ENCODE measurements at regions of chr12 and their contacts with region 1.

Region 1: GRCh38 chr12:43805860-43806736 is at the start of gene TWF1:
- DNase-seq: peak; percentile 85 to 92 (median 88)
- H3K4me3 ChIP-seq: peak within 1 kb of the TSS; percentile 85 to 89
- H3K4me3 Mint-ChIP-seq: peak within 1 kb of the TSS; percentile 99 to 100 (median 100)
- H3K27ac ChIP-seq: peak within 1 kb of the TSS; percentile 86
- H3K27ac Mint-ChIP-seq: peak within 1 kb of the TSS; percentile 99 to 100 (median 100)
- H3K4me1 ChIP-seq: peaks cover 34% of the 10 kb centered on the region
- H3K4me1 Mint-ChIP-seq: peaks cover 17 to 50% (median 35%) of the 10 kb centered on the region in 4 donors
- H3K27me3 ChIP-seq: no peaks in the 10 kb centered on the region
- H3K27me3 Mint-ChIP-seq: no peaks in the 10 kb centered on the region
- total RNA-seq, gene TWF1: 31.0 to 32.4 TPM

Region 2: GRCh38 chr12:42237052-42237852 is 1568.8 kb before region 1 on chr12:
- CTCF ChIA-PET with region 1: no interaction called
- POLR2A ChIA-PET with region 1: interaction called, 3 read pairs
- intact Hi-C with region 1: loop called (anchors 5 kb)
- DNase-seq: peak; percentile 72 to 80 (median 77)
- H3K4me3 ChIP-seq: peak overlapping the region; percentile 33 to 70
- H3K4me3 Mint-ChIP-seq: peak overlapping the region; percentile 86 to 92 (median 90)
- H3K27ac ChIP-seq: peak overlapping the region; percentile 66
- H3K27ac Mint-ChIP-seq: peak overlapping the region; percentile 82 to 94 (median 93)
- H3K4me1 ChIP-seq: peaks cover 49% of the 10 kb centered on the region
- H3K4me1 Mint-ChIP-seq: peaks cover 29 to 68% (median 36%) of the 10 kb centered on the region in 4 donors
- H3K27me3 ChIP-seq: no peaks in the 10 kb centered on the region
- H3K27me3 Mint-ChIP-seq: no peaks in the 10 kb centered on the region

Region 3: GRCh38 chr12:42325653-42326474 is 1480.2 kb before region 1 on chr12 and contains the starts of genes PPHLN1 and ZCRB1:
- CTCF ChIA-PET with region 1: no interaction called
- POLR2A ChIA-PET with region 1: interaction called, 5 read pairs
- intact Hi-C with region 1: loop called (anchors 5 kb)
- DNase-seq: peak; percentile 74 to 78 (median 76)
- H3K4me3 ChIP-seq: peak within 1 kb of the TSS; percentile 69 to 84
- H3K4me3 Mint-ChIP-seq: peak within 1 kb of the TSS; percentile 94 to 99 (median 99)
- H3K27ac ChIP-seq: peak within 1 kb of the TSS; percentile 79
- H3K27ac Mint-ChIP-seq: peak within 1 kb of the TSS; percentile 89 to 99 (median 99)
- H3K4me1 ChIP-seq: peaks cover 46% of the 10 kb centered on the region
- H3K4me1 Mint-ChIP-seq: peaks cover 29 to 60% (median 48%) of the 10 kb centered on the region in 4 donors
- H3K27me3 ChIP-seq: no peaks in the 10 kb centered on the region
- H3K27me3 Mint-ChIP-seq: no peaks in the 10 kb centered on the region
- total RNA-seq, gene PPHLN1: 98.0 to 104 TPM
- total RNA-seq, gene ZCRB1: 21.2 to 27.1 TPM

Region 4: DNA sequence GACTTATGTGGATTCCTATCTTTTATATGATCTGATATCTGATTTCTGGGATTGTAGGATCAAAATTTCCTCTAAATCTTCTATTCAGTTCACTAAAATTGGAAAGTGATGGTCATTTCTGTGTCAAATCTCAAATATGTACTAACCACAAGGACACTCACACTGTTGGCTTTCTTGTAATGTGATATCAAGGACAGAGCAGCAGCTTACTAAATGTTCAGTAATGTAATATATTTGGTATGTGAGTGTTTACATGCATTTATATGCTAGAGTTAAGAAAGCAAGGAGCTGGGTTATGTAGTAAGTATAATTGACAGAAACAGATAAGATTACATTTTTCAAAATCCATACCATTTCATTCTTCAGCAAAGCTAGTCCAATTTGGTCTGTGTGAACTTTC is 64.0 kb before region 1 on chr12:
- CTCF ChIA-PET with region 1: no interaction called
- POLR2A ChIA-PET with region 1: no interaction called
- intact Hi-C with region 1: no loop called
- DNase-seq: no peak
- H3K4me3 ChIP-seq: no peak overlapping the region
- H3K4me3 Mint-ChIP-seq: no peak overlapping the region
- H3K27ac ChIP-seq: no peak overlapping the region
- H3K27ac Mint-ChIP-seq: no peak overlapping the region
- H3K4me1 ChIP-seq: no peaks in the 10 kb centered on the region
- H3K4me1 Mint-ChIP-seq: peaks cover 0 to 3% (median under 1%) of the 10 kb centered on the region in 4 donors
- H3K27me3 ChIP-seq: no peaks in the 10 kb centered on the region
- H3K27me3 Mint-ChIP-seq: no peaks in the 10 kb centered on the region

Region 5: GRCh38 chr12:43758728-43759563 is 47.2 kb before region 1 on chr12 and contains the starts of genes IRAK4 and PUS7L:
- CTCF ChIA-PET with region 1: interaction called, 14 read pairs
- POLR2A ChIA-PET with region 1: interaction called, 88 read pairs
- intact Hi-C with region 1: loop called (anchors 1 kb)
- DNase-seq: peak; percentile 90 to 96 (median 93)
- H3K4me3 ChIP-seq: peak within 1 kb of the TSS; percentile 67 to 91
- H3K4me3 Mint-ChIP-seq: peak within 1 kb of the TSS; percentile 98 to 99 (median 98)
- H3K27ac ChIP-seq: peak within 1 kb of the TSS; percentile 93
- H3K27ac Mint-ChIP-seq: peak within 1 kb of the TSS; percentile 99
- H3K4me1 ChIP-seq: peaks cover 61% of the 10 kb centered on the region
- H3K4me1 Mint-ChIP-seq: peaks cover 45 to 84% (median 69%) of the 10 kb centered on the region in 4 donors
- H3K27me3 ChIP-seq: no peaks in the 10 kb centered on the region
- H3K27me3 Mint-ChIP-seq: no peaks in the 10 kb centered on the region
- total RNA-seq, gene IRAK4: 64.0 to 73.1 TPM
- total RNA-seq, gene PUS7L: 25.5 to 25.6 TPM

Region 6: GRCh38 chr12:43795716-43796288 is 10.3 kb before region 1 on chr12:
- CTCF ChIA-PET with region 1: interaction called, 3 read pairs
- POLR2A ChIA-PET with region 1: interaction called, 16 read pairs
- intact Hi-C with region 1: no loop called
- DNase-seq: no peak
- H3K4me3 ChIP-seq: no peak overlapping the region
- H3K4me3 Mint-ChIP-seq: no peak overlapping the region
- H3K27ac ChIP-seq: no peak overlapping the region
- H3K27ac Mint-ChIP-seq: peak overlapping the region in 2 of 7 donors; percentile 32 to 59
- H3K4me1 ChIP-seq: no peaks in the 10 kb centered on the region
- H3K4me1 Mint-ChIP-seq: peaks cover 0 to 2% (median under 1%) of the 10 kb centered on the region in 4 donors
- H3K27me3 ChIP-seq: no peaks in the 10 kb centered on the region
- H3K27me3 Mint-ChIP-seq: no peaks in the 10 kb centered on the region

Region 7: DNA sequence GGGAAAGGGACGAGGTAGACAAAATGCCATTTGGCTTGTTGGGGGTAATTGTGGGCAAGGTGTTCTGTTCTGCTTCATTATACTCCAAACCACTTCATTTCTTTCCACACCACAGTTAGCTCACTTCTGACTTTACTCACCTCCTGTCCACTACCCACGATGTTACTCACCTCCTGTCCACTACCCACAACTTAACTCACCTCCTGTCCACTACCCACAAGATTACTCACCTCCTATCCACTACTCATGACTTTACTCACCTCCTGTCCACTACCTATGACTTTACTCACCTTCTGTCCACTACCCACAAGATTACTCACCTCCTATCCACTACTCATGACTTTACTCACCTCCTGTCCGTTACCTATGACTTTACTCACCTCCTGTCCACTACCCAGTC is 10.1 kb after region 1 on chr12:
- CTCF ChIA-PET with region 1: interaction called, 3 read pairs
- POLR2A ChIA-PET with region 1: interaction called, 30 read pairs
- intact Hi-C with region 1: no loop called
- DNase-seq: no peak
- H3K4me3 ChIP-seq: no peak overlapping the region
- H3K4me3 Mint-ChIP-seq: no peak overlapping the region
- H3K27ac ChIP-seq: no peak overlapping the region
- H3K27ac Mint-ChIP-seq: peak overlapping the region in 1 of 7 donors; percentile 54
- H3K4me1 ChIP-seq: no peaks in the 10 kb centered on the region
- H3K4me1 Mint-ChIP-seq: peaks cover under 1 to 9% (median 4%) of the 10 kb centered on the region in 4 donors
- H3K27me3 ChIP-seq: no peaks in the 10 kb centered on the region
- H3K27me3 Mint-ChIP-seq: peaks cover 2 to 7% of the 10 kb centered on the region in 2 donors

Region 8: GRCh38 chr12:43835656-43836474 is 29.8 kb after region 1 on chr12 and contains the start of gene TMEM117:
- CTCF ChIA-PET with region 1: interaction called, 4 read pairs
- POLR2A ChIA-PET with region 1: interaction called, 90 read pairs
- intact Hi-C with region 1: loop called (anchors 1 kb)
- DNase-seq: peak; percentile 66 to 74 (median 70)
- H3K4me3 ChIP-seq: peak within 1 kb of the TSS; percentile 26 to 67
- H3K4me3 Mint-ChIP-seq: peak within 1 kb of the TSS; percentile 85 to 98 (median 90)
- H3K27ac ChIP-seq: peak within 1 kb of the TSS; percentile 61
- H3K27ac Mint-ChIP-seq: peak within 1 kb of the TSS; percentile 85 to 98 (median 91)
- H3K4me1 ChIP-seq: peaks cover 46% of the 10 kb centered on the region
- H3K4me1 Mint-ChIP-seq: peaks cover 29 to 55% (median 46%) of the 10 kb centered on the region in 4 donors
- H3K27me3 ChIP-seq: no peaks in the 10 kb centered on the region
- H3K27me3 Mint-ChIP-seq: no peaks in the 10 kb centered on the region
- total RNA-seq, gene TMEM117: 3.7 to 4.7 TPM